ENCODE measurements at regions of chr11 and their contacts with region 1.

Region 1: GRCh38 chr11:82790723-82791484 is 57.2 kb upstream of the FAM181B start:
- DNase-seq: peak in 2 of 5 donors; percentile 13 to 32
- ATAC-seq: peak; percentile 49 to 86 (median 84)
- H3K4me3 ChIP-seq: no peak overlapping the region
- H3K27ac ChIP-seq: peak overlapping the region in 2 of 12 donors; percentile 34 to 59
- H3K4me1 ChIP-seq: peaks cover 0 to 13% (median 6%) of the 10 kb centered on the region in 12 donors
- H3K27me3 ChIP-seq: no peaks in the 10 kb centered on the region
- CTCF ChIP-seq: no peak
- POLR2A ChIP-seq: no peak

Region 2: DNA sequence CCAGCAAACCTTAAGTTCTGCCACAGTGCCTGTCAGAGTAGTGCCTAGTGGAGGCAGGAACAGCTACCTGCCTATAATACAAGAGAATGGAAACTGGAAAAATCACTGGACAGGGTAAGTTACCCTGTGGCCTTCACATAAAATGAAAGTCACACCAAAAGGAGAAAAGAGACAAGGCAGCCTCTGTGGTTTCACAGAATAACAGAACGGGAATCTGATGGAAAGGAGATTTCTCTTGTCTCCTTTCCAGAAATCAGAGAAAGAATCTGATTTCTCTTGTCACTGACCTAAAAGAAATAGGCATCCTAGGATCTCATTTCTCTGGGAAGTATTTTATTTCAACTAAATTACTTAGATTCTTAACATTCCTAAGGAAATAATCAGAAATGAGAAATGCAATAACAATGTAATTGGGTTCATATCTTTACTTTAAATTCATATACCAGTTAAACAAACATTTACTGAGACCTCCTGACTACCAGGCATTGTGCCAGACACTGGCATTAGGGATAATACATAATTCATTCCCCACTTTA is 67.7 kb after region 1 on chr11:
- intact Hi-C with region 1: loop called in 1 of 10 experiments (anchors 10 kb)
- DNase-seq: no peak
- ATAC-seq: no peak
- H3K4me3 ChIP-seq: no peak overlapping the region
- H3K27ac ChIP-seq: peak overlapping the region in 1 of 12 donors; percentile 14
- H3K4me1 ChIP-seq: peaks cover 0 to 8% (median 0%) of the 10 kb centered on the region in 12 donors
- H3K27me3 ChIP-seq: no peaks in the 10 kb centered on the region
- CTCF ChIP-seq: no peak
- POLR2A ChIP-seq: no peak